ENCODE measurements at regions of chr16 and their contacts with region 1.

Region 1: GRCh38 chr16:79601931-79602627 is 1.5 kb upstream of the MAF start:
- DNase-seq: peak; percentile 75
- H3K4me3 Mint-ChIP-seq: peak overlapping the region; percentile 92
- H3K27ac Mint-ChIP-seq: peak overlapping the region; percentile 98
- H3K4me1 Mint-ChIP-seq: peaks cover 51% of the 10 kb centered on the region
- H3K27me3 Mint-ChIP-seq: peaks cover 9% of the 10 kb centered on the region

Region 2: GRCh38 chr16:78705694-78706093 is 896.4 kb before region 1 on chr16:
- intact Hi-C with region 1: loop called (anchors 1 kb)
- DNase-seq: peak; percentile 2
- H3K4me3 Mint-ChIP-seq: no peak overlapping the region
- H3K27ac Mint-ChIP-seq: no peak overlapping the region
- H3K4me1 Mint-ChIP-seq: peaks cover 14% of the 10 kb centered on the region
- H3K27me3 Mint-ChIP-seq: peaks cover 2% of the 10 kb centered on the region

Region 3: GRCh38 chr16:78900044-78900811 is 701.9 kb before region 1 on chr16:
- intact Hi-C with region 1: loop called (anchors 2 kb)
- DNase-seq: no peak
- H3K4me3 Mint-ChIP-seq: no peak overlapping the region
- H3K27ac Mint-ChIP-seq: peak overlapping the region; percentile 51
- H3K4me1 Mint-ChIP-seq: peaks cover 42% of the 10 kb centered on the region
- H3K27me3 Mint-ChIP-seq: no peaks in the 10 kb centered on the region

Region 4: DNA sequence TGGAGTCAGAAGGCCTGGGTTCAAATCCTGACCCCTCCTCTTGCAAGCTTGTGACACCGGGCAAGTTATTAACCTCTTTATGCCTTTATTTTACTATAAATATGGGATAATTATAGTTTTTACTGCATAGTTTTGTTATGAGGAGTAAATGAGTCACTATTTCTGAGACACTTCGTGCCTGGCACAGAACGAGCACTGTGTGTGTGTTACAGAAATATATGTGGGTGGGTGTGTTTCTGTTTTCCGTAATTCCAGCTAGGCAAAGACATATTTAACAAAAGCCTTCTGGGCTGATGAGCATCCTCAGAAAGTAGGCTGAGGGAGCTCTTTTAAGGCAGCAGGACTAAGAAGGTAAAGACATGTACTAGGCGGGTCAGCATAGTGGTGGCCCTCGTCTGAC is 419.5 kb before region 1 on chr16:
- intact Hi-C with region 1: no loop called
- DNase-seq: no peak
- H3K4me3 Mint-ChIP-seq: no peak overlapping the region
- H3K27ac Mint-ChIP-seq: no peak overlapping the region
- H3K4me1 Mint-ChIP-seq: no peaks in the 10 kb centered on the region
- H3K27me3 Mint-ChIP-seq: peaks cover 9% of the 10 kb centered on the region

Region 5: GRCh38 chr16:79269211-79269863 is 332.7 kb before region 1 on chr16:
- intact Hi-C with region 1: loop called (anchors 1 kb)
- DNase-seq: peak; percentile 58
- H3K4me3 Mint-ChIP-seq: peak overlapping the region; percentile 60
- H3K27ac Mint-ChIP-seq: peak overlapping the region; percentile 89
- H3K4me1 Mint-ChIP-seq: peaks cover 88% of the 10 kb centered on the region
- H3K27me3 Mint-ChIP-seq: peaks cover 12% of the 10 kb centered on the region

Region 6: GRCh38 chr16:79528338-79528737 is 73.7 kb before region 1 on chr16:
- intact Hi-C with region 1: no loop called
- DNase-seq: no peak
- H3K4me3 Mint-ChIP-seq: no peak overlapping the region
- H3K27ac Mint-ChIP-seq: no peak overlapping the region
- H3K4me1 Mint-ChIP-seq: no peaks in the 10 kb centered on the region
- H3K27me3 Mint-ChIP-seq: peaks cover 15% of the 10 kb centered on the region

Region 7: GRCh38 chr16:79640513-79641355 is 38.7 kb after region 1 on chr16:
- intact Hi-C with region 1: loop called (anchors 1 kb)
- DNase-seq: peak; percentile 17
- H3K4me3 Mint-ChIP-seq: peak overlapping the region; percentile 13
- H3K27ac Mint-ChIP-seq: peak overlapping the region; percentile 49
- H3K4me1 Mint-ChIP-seq: peaks cover 55% of the 10 kb centered on the region
- H3K27me3 Mint-ChIP-seq: no peaks in the 10 kb centered on the region

Region 8: DNA sequence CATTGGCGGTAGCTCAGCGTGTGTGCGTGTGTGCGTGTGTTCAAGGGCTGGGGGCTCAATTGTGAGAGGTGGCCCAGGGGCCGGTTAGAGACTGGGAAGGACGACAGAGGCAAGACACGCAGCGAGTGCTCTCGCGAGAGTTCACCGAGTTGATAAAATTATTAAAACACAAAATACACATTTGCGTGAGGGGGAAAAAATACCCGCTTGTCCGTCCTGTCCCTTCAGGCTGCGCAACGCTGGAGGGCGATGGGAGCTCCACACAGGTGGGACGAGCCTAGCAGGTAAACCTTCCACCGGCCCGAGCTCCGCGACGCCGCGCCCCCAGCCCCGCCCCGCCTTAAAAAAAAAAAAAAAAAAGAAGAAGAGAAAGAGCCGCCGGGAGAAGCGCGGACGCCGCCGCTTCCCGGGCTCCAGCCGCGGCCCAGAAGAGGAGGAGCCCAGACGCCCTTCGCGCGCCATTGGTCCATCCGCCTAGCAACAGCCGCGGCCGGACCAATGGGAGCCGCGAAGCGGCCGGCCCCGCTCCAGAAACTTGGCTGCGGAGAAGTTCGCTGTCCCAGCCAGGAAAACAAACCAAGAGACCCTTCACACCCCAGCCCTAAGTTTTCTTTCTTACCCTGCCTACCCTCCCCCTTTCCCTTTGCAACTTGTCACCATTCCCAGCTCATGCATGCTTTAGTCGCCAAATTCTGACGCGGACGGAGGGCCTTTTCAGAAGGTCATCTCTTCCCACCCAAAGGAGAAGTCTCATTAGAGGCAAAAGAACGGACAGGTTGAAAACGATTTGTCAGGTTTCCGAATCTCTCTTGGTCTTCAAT is 168.4 kb after region 1 on chr16:
- intact Hi-C with region 1: loop called (anchors 1 kb)
- DNase-seq: peak; percentile 71
- H3K4me3 Mint-ChIP-seq: peak overlapping the region; percentile 86
- H3K27ac Mint-ChIP-seq: peak overlapping the region; percentile 84
- H3K4me1 Mint-ChIP-seq: peaks cover 36% of the 10 kb centered on the region
- H3K27me3 Mint-ChIP-seq: no peaks in the 10 kb centered on the region

Region 9: DNA sequence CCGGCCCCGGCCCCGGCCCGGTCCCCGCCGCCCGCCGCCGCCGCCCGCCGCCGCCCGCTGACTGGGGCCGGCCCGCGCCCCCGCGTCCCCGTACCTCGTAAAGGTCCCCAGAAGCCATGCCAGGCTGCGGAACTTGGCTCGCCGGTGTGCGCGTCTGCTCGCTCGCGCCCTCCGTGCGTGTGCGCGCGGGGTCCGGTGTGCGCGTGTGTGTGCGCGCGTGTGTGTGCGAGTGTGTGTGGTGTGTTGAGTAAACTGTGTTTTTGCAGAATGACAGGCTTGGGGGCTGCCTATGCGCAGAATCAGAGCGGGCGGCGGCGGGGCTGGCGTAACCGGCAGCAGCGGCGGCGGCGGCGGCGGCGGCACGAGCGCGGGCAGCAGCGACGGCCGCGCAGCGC is 1202.0 kb after region 1 on chr16:
- intact Hi-C with region 1: loop called (anchors 10 kb)
- DNase-seq: peak; percentile 56
- H3K4me3 Mint-ChIP-seq: peak overlapping the region; percentile 95
- H3K27ac Mint-ChIP-seq: peak overlapping the region; percentile 98
- H3K4me1 Mint-ChIP-seq: peaks cover 57% of the 10 kb centered on the region
- H3K27me3 Mint-ChIP-seq: no peaks in the 10 kb centered on the region

Measured in activated T-helper 1 cell treated with anti-CD3 and anti-CD28 coated beads, Interleukin-12 subunit alpha, Interleukin-12 subunit beta, Interleukin-2, Interleukin-4 antibody, amounts not matched to agents 30 ng/mL and 10 ng/mL and 1 ng/mL, durations not matched to agents 14 hours and 24 hours and 36 hours (primary cell).